Activated T-helper 2 cell treated with anti-CD3 and anti-CD28 coated beads, Interferon-gamma antibody, Interleukin-2, Interleukin-4, amounts not matched to agents 10 μg/mL and 5 μg/mL and 100 μg/mL, durations not matched to agents 14 hours and 24 hours and 36 hours (primary cell): ENCODE measurements at regions of chr17 and their contacts with region 1.

Region 1: DNA sequence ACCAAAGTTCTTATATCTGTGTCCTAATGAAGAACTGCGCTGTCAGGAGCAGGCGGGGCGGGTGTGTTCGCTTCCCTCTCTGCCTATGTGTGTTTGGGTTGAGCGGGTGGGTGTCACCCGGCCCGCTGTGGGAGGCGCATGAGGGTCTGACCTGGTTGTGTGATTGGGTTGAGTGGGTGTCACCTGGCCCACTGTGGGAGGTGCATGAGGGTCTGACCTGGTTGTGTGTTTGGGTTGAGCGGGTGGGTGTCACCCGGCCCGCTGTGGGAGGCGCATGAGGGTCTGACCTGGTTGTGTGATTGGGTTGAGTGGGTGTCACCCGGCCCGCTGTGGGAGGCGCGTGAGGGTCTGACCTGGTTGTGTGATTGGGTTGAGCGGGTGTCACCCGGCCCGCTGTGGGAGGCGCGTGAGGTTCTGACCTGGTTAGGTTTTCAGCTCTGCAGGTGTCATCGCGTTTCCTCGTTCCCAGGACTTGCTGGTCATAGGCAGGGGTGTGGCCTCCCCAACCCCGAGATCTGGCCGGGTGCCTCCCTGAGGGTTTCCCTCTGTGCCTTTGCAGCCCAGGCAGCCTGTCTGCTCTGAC is 69.6 kb upstream of the ZNF750 start:
- DNase-seq: no peak
- H3K4me3 Mint-ChIP-seq: no peak overlapping the region
- H3K27ac Mint-ChIP-seq: no peak overlapping the region
- H3K4me1 Mint-ChIP-seq: peaks cover 7% of the 10 kb centered on the region
- H3K27me3 Mint-ChIP-seq: no peaks in the 10 kb centered on the region

Region 2: GRCh38 chr17:82848022-82848592 is 61.3 kb before region 1 on chr17:
- intact Hi-C with region 1: loop called (anchors 10 kb)
- DNase-seq: peak; percentile 26
- H3K4me3 Mint-ChIP-seq: no peak overlapping the region
- H3K27ac Mint-ChIP-seq: peak overlapping the region; percentile 69
- H3K4me1 Mint-ChIP-seq: peaks cover 12% of the 10 kb centered on the region
- H3K27me3 Mint-ChIP-seq: no peaks in the 10 kb centered on the region